RWPE1 (cell line): ENCODE measurements at regions of chr3 and their contacts with region 1.

Region 1: GRCh38 chr3:32467333-32468070 is 35.1 kb downstream of the CMTM6 start:
- DNase-seq: peak; percentile 65
- H3K27ac ChIP-seq: peak overlapping the region; percentile 4; the same call in 1 of the 2 replicates
- CTCF ChIP-seq: peak; percentile 97

Region 2: GRCh38 chr3:32374788-32375595 is 92.5 kb before region 1 on chr3:
- CTCF ChIA-PET with region 1: interaction called, 15 read pairs
- POLR2A ChIA-PET with region 1: no interaction called
- DNase-seq: peak; percentile 42
- H3K27ac ChIP-seq: no peak overlapping the region
- CTCF ChIP-seq: peak; percentile 70

Region 3: GRCh38 chr3:32406486-32407408 is 60.8 kb before region 1 on chr3:
- CTCF ChIA-PET with region 1: interaction called, 10 read pairs
- POLR2A ChIA-PET with region 1: no interaction called
- DNase-seq: no peak
- H3K27ac ChIP-seq: peak overlapping the region; percentile 81
- CTCF ChIP-seq: no peak

Region 4: GRCh38 chr3:32570421-32571191 is 103.1 kb after region 1 on chr3 and contains the start of gene DYNC1LI1:
- CTCF ChIA-PET with region 1: no interaction called
- POLR2A ChIA-PET with region 1: no interaction called
- DNase-seq: peak; percentile 81
- H3K27ac ChIP-seq: peak within 1 kb of the TSS; percentile 94
- CTCF ChIP-seq: no peak